Stomach (tissue), 19 donors: ENCODE measurements at regions of chr14 and their contacts with region 1.

Region 1: GRCh38 chr14:71753126-71753830 is 179.0 kb upstream of the RGS6 start:
- DNase-seq: peak; percentile 88 to 96
- H3K4me3 ChIP-seq: no peak overlapping the region
- H3K27ac ChIP-seq: no peak overlapping the region
- H3K4me1 ChIP-seq: peaks cover 5 to 11% (median 9%) of the 10 kb centered on the region in 4 donors
- H3K27me3 ChIP-seq: no peaks in the 10 kb centered on the region
- CTCF ChIP-seq: peak in 5 of 7 experiments; percentile 79 to 92 (median 84)
- EP300 ChIP-seq: no peak
- POLR2A ChIP-seq: no peak

Region 2: GRCh38 chr14:71138448-71139293 is 614.6 kb before region 1 on chr14:
- intact Hi-C with region 1: loop called (anchors 5 kb)
- DNase-seq: peak; percentile 54 to 78
- H3K4me3 ChIP-seq: no peak overlapping the region
- H3K27ac ChIP-seq: no peak overlapping the region
- H3K4me1 ChIP-seq: peaks cover 4 to 11% (median 5%) of the 10 kb centered on the region in 4 donors
- H3K27me3 ChIP-seq: no peaks in the 10 kb centered on the region
- CTCF ChIP-seq: peak in 5 of 7 experiments; percentile 78 to 93 (median 88)
- EP300 ChIP-seq: no peak
- POLR2A ChIP-seq: peak in 1 of 4 donors; percentile 55

Region 3: GRCh38 chr14:72049455-72049854 is 296.2 kb after region 1 on chr14:
- intact Hi-C with region 1: no loop called
- DNase-seq: no peak
- H3K4me3 ChIP-seq: no peak overlapping the region
- H3K27ac ChIP-seq: no peak overlapping the region
- H3K4me1 ChIP-seq: no peaks in the 10 kb centered on the region
- H3K27me3 ChIP-seq: no peaks in the 10 kb centered on the region
- CTCF ChIP-seq: no peak
- EP300 ChIP-seq: no peak
- POLR2A ChIP-seq: no peak